ENCODE measurements at regions of chr3 and their contacts with region 1.

Region 1: DNA sequence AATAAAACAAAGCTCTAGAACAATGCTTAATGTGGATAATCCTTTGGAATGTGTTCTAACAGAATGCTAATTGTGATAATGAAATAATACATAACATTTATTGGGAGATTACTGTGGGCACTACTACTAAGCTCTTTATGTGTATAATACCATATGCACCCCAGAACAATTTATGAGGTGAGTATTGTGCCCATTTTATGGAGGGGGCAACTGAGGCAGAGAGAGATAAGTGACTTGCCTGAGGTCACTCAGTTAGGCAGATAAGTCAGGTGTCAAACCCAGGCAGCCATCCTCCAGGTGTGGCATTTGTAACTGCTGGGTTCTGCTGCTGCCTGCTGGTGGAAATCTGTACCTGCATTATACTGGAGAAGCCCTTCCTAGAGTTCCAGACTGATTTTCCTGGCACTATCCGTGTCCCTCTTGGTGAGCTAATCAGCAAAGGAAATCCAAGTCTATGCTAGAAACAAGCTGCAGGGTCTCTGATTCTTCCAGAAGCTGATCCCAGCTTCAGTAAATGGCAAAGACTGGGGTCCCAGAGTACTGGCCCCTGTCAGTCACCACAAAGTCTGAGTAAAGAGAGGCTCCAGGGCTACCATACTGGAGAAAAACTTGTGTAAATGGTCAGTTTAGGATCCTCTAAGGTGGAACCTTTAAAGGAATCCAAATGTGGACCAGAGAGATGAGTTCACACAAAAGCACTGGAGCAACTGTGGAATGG is 22.6 kb upstream of the RBP1 start:
- DNase-seq: no peak
- ATAC-seq: peak; percentile 85

Region 2: DNA sequence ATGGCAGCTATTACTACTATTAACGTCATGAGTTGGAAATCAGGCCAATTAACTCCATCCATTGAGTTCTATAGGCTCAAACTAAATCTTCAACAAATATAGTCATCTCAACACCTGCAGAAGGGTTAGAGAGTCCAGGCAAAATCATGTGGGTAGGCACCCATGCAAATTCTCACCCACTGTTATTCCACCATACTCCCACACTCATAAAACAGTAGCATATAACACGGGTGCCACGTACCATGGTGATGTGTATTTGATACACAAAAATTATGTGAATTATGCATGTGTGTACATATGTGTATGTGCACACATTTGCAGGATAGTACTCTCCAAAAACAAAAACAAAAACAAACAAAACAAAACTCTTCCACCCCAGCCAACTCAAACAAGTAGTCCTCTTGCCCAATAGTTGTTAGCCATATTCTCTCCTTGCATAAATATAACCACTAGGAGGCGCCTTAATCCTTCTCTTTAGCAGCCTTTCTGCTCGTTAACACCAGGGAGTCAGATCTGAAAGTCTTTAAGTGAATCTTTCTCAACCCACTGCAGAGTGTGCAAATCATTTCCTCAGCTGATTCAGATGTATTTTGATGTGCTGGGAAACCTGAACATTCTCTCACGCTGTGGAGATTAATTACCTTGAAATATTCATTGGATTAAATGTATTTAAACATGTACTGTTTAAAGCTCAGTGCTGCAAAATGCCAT is 134.7 kb before region 1 on chr3:
- intact Hi-C with region 1: loop called (anchors 2 kb)
- DNase-seq: no peak
- ATAC-seq: peak; percentile 92